ENCODE measurements at regions of chr4 and their contacts with region 1.

Region 1: GRCh38 chr4:15655229-15656037 is at the start of gene FBXL5:
- DNase-seq: peak; percentile 84
- H3K4me3 Mint-ChIP-seq: peak within 1 kb of the TSS; percentile 99
- H3K27ac Mint-ChIP-seq: peak within 1 kb of the TSS; percentile 96
- H3K4me1 Mint-ChIP-seq: peaks cover 61% of the 10 kb centered on the region
- H3K27me3 Mint-ChIP-seq: no peaks in the 10 kb centered on the region
- total RNA-seq, gene FBXL5: 31.3 and 34.7 TPM in 2 replicates

Region 2: GRCh38 chr4:14787894-14788293 is 867.5 kb before region 1 on chr4:
- intact Hi-C with region 1: loop called (anchors 10 kb)
- DNase-seq: no peak
- H3K4me3 Mint-ChIP-seq: no peak overlapping the region
- H3K27ac Mint-ChIP-seq: no peak overlapping the region
- H3K4me1 Mint-ChIP-seq: peaks cover 49% of the 10 kb centered on the region
- H3K27me3 Mint-ChIP-seq: no peaks in the 10 kb centered on the region

Region 3: DNA sequence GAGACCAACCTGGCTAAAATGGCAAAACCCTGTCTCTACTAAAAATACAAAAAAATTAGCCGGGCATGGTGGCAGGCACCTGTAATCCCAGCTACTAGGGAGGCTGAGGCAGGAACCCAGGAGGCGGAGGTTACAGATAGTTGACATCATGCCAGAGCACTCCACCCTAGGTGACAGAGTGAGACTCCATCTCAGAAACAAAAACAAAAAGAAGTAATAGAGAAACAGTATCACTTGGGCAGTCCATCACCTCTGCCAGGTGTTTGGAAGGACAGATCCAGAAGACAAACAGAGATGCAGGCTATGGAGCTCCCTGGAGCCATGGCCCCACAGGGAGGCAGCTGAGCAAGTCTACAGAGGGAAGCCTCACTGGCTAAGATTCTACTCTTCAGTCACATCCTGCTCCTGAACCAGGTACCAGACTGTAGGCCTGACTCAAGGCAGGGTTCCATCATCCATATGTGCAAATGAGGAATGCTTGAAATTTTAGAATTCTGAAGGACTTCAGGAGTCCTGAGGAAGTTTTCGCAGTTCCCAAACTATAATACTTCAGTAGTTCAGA is 734.6 kb before region 1 on chr4:
- intact Hi-C with region 1: loop called (anchors 10 kb)
- DNase-seq: no peak
- H3K4me3 Mint-ChIP-seq: no peak overlapping the region
- H3K27ac Mint-ChIP-seq: no peak overlapping the region
- H3K4me1 Mint-ChIP-seq: no peaks in the 10 kb centered on the region
- H3K27me3 Mint-ChIP-seq: no peaks in the 10 kb centered on the region

Region 4: GRCh38 chr4:14994241-14994640 is 661.2 kb before region 1 on chr4:
- intact Hi-C with region 1: no loop called
- DNase-seq: no peak
- H3K4me3 Mint-ChIP-seq: no peak overlapping the region
- H3K27ac Mint-ChIP-seq: no peak overlapping the region
- H3K4me1 Mint-ChIP-seq: peaks cover 7% of the 10 kb centered on the region
- H3K27me3 Mint-ChIP-seq: peaks cover 10% of the 10 kb centered on the region

Region 5: GRCh38 chr4:15636835-15637234 is 18.6 kb before region 1 on chr4:
- intact Hi-C with region 1: no loop called
- DNase-seq: no peak
- H3K4me3 Mint-ChIP-seq: no peak overlapping the region
- H3K27ac Mint-ChIP-seq: no peak overlapping the region
- H3K4me1 Mint-ChIP-seq: no peaks in the 10 kb centered on the region
- H3K27me3 Mint-ChIP-seq: no peaks in the 10 kb centered on the region

Region 6: GRCh38 chr4:15681207-15682015 is 26.0 kb after region 1 on chr4 and contains the start of gene FAM200B:
- intact Hi-C with region 1: loop called (anchors 1 kb)
- DNase-seq: peak; percentile 97
- H3K4me3 Mint-ChIP-seq: peak within 1 kb of the TSS; percentile 97
- H3K27ac Mint-ChIP-seq: peak within 1 kb of the TSS; percentile 94
- H3K4me1 Mint-ChIP-seq: peaks cover 45% of the 10 kb centered on the region
- H3K27me3 Mint-ChIP-seq: no peaks in the 10 kb centered on the region
- total RNA-seq, gene FAM200B: 5.5 and 6.6 TPM in 2 replicates

Region 7: DNA sequence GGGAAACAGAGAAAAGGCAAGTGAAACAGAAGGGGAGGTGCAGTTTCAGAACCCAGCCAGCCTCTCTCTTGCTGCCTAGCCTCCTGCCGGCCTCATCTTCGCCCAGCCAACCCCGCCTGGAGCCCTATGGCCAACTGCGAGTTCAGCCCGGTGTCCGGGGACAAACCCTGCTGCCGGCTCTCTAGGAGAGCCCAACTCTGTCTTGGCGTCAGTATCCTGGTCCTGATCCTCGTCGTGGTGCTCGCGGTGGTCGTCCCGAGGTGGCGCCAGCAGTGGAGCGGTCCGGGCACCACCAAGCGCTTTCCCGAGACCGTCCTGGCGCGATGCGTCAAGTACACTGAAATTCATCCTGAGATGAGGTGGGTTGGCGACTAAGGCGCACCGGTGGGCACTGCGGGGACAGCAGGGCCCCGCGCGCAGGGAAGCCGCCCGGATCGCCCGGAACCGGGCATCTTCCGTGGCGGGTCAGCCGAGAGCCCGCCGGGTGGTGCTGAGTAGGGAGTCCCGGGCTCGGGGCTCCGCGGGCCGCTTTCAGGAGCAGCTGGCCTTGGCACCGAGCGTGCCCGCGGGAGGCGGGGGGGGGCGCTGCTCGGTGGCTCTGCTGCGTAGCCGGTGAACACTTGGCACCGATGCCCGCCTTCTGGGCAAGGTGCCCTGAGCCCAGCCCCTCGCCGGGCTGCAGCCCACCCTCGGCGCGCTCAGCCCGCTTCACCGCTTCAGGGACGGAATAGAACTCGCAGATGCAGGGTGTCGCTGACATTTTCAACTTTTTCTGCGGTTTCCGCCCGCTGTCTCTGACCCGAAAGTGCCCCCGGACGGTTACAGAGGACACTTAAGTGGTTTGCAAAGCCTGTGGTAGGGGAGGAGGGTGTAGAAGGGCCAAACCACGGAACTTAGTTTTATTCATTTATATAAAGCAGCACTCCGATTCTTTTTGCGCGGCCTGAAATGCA is 123.1 kb after region 1 on chr4 and contains the start of gene CD38:
- intact Hi-C with region 1: loop called (anchors 1 kb)
- DNase-seq: peak; percentile 64
- H3K4me3 Mint-ChIP-seq: peak within 1 kb of the TSS; percentile 93
- H3K27ac Mint-ChIP-seq: peak within 1 kb of the TSS; percentile 92
- H3K4me1 Mint-ChIP-seq: peaks cover 86% of the 10 kb centered on the region
- H3K27me3 Mint-ChIP-seq: no peaks in the 10 kb centered on the region
- total RNA-seq, gene CD38: 148 and 152 TPM in 2 replicates

Region 8: GRCh38 chr4:16225863-16226815 is 570.7 kb after region 1 on chr4 and contains the start of gene TAPT1:
- intact Hi-C with region 1: loop called (anchors 2 kb)
- DNase-seq: peak; percentile 78
- H3K4me3 Mint-ChIP-seq: peak within 1 kb of the TSS; percentile 97
- H3K27ac Mint-ChIP-seq: peak within 1 kb of the TSS; percentile 96
- H3K4me1 Mint-ChIP-seq: peaks cover 60% of the 10 kb centered on the region
- H3K27me3 Mint-ChIP-seq: no peaks in the 10 kb centered on the region
- total RNA-seq, gene TAPT1: 26.0 and 31.8 TPM in 2 replicates

Region 9: DNA sequence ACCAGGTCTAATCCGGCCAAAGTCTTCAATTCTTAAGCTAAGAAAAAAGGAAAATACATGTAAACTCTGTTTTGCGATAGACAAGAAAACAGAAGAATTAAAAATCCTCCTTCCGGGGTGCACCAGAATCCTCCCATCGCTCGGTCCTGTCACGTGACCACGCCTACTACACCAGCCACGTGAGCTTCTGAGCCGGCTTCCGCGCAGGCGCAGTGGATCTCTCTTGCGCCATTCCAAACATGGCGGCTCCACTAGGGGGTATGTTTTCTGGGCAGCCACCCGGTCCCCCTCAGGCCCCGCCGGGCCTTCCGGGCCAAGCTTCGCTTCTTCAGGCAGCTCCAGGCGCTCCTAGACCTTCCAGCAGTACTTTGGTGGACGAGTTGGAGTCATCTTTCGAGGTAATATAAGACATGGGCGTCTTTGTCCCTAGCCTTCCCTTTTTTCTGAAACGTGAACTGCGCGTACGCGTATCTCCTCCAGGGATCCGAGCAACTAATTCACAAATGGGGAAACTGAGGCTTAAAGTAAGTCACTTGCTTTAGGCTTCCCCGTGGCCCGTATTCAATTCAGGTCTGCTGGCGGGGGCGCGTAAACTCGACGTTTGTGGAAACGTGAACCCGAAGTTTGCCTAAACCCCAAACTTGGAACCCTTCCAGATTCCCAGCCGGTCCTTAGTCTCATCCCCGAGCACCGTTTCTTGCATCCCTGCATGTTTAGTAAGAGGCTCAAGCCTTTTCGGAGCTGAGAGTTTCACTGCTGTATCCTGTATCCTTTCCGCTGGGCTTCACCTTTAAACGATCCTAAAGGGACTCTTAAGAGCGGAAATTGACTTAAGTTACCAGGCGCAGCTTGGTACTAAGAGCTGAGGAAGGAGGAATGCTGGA is 1959.2 kb after region 1 on chr4 and contains the start of gene MED28:
- intact Hi-C with region 1: loop called (anchors 10 kb)
- DNase-seq: peak; percentile 93
- H3K4me3 Mint-ChIP-seq: peak within 1 kb of the TSS; percentile 96
- H3K27ac Mint-ChIP-seq: peak within 1 kb of the TSS; percentile 97
- H3K4me1 Mint-ChIP-seq: peaks cover 32% of the 10 kb centered on the region
- H3K27me3 Mint-ChIP-seq: peaks cover 2% of the 10 kb centered on the region
- total RNA-seq, gene MED28: 46.6 and 49.6 TPM in 2 replicates